ENCODE measurements at regions of chr14 and their contacts with region 1.

Region 1: DNA sequence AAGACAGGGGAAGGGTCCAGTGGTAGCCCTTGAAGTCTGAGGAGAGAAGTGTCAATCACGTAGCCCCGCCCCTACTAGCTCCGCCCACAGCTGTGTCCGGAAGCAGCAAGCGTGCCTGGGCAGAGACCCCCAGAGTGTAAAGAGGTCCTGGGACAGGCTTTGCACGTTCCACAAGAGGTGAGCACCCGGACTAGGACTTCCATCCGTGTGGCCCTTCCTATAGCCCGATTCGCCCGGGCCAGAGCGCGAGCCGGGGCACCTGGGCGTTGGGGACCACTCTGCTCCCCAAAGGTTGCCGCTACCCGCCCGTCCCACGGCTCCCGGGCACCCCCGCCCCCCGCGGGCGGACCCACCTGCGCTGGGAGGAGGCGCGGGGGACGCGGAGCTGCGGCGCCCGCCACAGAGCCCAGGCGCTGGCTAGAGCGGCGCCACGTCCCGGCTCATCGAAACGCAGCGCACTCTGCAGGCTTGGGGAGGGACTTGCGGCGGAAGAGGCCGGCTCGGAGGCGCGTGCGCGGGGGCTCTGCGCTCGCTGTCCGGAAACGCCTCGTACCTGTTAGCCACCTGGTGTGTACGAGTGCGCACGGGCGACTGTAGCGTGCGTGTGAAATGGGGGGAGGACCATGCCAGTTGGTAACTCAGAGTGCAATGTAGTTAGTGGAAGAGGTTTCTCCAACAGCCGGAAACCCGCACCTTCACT is at the start of gene RABGGTA:
- DNase-seq: peak; percentile 94
- ATAC-seq: peak; percentile 96
- total RNA-seq, gene RABGGTA: 21.5 TPM

Region 2: DNA sequence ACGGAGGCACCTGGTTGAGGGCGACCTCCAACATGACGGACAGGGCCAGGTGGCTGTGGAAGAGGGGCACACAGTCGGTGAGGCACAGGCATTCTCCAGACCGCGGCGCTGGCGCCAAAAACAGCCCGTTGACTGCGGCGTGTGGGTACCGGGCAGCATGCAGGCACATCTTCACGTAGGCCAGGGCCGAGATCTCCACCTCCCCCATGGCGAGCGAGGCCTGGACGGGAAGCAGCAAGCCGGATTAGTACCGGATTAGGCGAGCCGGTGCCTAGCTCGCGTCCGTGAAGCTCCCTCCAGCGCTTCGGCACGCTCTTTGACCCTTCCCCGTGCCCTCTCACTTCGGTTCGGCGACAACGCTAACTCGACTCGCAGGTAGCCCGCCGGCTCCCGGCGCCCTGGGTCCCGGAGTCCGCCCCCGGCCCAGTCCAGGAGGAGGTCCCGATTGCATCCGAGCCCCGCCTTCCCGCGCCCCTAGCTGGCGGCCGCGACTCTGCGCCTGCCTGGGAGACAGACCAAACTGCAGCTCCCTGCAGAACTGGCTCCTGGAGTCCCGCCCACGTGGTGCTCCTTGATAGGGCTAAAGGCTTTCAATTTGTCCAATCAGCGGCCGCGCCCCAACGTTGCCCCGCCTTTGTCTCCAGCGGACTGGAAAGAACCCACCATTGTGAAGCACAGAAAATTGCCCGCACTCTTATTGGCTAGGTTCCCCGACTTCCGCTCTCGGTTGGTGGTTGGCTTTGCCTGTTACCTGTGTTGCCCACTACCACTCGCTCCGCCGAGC is 130.0 kb before region 1 on chr14 and contains the start of gene EMC9:
- intact Hi-C with region 1: no loop called
- DNase-seq: peak; percentile 100
- ATAC-seq: peak; percentile 96
- total RNA-seq, gene EMC9: 14.6 TPM

Region 3: GRCh38 chr14:24299255-24300195 is 28.2 kb after region 1 on chr14 and contains the starts of genes DHRS1 and NOP9:
- intact Hi-C with region 1: loop called (anchors 2 kb)
- DNase-seq: peak; percentile 96
- ATAC-seq: peak; percentile 88
- total RNA-seq, gene DHRS1: 8.3 TPM
- total RNA-seq, gene NOP9: 23.0 TPM